Right ventricle myocardium inferior (tissue), 1 donor: ENCODE measurements at regions of chr9 and their contacts with region 1.

Region 1: DNA sequence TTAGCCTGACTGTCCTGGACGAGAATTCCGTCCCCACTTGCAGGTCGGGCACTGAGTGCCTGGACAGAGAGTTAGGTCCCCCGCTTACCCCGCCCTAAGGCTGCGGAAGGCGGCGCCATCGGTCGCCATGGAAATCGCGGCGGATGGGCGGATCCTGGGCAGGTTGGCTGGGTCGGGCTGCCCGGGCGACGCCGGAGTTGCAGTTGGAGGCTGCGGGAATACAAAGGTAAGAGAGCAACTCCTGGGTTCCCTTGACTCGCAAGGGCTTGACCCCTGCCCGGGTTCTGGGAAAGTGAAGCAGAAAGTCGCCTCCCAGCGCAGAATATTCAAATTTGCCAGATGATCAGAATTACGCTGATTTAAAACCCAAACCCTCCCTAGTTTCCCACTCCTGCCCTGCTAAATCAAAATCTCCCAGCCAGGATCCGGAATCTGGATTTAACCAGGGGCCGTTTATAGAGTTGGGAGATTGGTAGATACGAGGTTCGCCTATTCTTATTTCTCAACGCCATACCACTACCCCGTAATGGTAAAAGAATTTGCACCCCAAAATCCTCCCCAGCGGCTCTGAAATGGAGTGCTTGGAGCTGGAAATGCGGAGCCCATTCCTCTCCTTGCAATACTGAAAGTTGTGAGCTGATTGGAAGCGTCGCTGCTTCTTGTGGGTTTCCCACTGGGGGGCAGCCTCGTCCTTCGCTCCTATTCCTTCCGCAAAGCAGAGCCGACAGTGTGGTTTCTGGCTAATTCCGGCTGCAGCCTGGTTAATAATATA is 156.4 kb upstream of the RASEF start:
- DNase-seq: peak; percentile 86
- ATAC-seq: peak; percentile 97

Region 2: DNA sequence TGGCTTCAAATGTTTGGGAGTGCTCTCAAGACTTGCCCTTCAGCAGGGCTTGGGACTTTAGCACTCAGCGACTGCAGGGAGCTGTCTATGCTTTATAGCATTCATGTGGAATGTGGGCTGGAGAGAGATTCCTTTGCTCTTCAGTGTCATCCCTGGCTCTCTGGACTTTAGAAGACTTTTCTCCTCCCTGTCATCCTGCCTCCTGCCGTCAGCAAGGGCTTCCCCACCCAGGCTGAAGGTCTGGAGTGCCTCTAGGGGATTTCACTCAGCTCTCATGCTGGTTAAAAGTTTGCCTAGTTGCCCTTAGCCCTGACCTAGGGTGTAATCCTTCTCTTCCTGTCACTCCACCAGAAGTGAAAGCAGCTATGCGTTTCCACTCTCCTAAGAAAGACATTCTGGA is 108.0 kb after region 1 on chr9:
- intact Hi-C with region 1: loop called (anchors 5 kb)
- DNase-seq: no peak
- ATAC-seq: peak; percentile 42

Region 3: DNA sequence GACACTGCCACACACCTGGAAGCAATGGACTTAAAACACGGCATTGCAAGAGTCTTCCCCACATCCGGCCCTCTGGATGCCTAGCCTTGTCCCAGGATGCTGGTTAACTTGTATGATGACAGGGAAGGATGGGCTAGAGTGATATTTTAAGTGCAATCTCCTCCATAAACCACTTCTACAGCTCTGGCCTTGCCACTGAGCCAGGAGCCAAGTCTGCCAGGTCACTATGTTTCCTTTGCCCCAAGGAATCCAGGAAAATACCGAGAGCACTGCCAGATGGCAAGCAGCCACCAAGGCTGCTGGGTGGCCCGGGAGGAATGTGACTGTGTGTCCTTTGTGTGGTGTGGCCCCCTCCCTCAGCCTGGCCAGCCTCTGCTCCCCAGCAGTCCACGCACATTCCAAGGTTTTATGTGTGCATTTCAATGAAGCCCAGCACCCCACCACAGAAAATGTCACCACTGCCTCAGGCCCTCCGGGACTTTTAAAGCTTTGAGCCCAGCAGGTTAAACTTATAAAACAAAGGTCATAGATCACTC is 212.8 kb after region 1 on chr9:
- intact Hi-C with region 1: loop called (anchors 5 kb)
- DNase-seq: peak; percentile 85
- ATAC-seq: peak; percentile 81